ENCODE measurements at regions of chr6 and their contacts with region 1.

Region 1: GRCh38 chr6:169529931-169530751 is 171.7 kb downstream of the WDR27 start:
- DNase-seq: peak; percentile 31
- H3K4me3 Mint-ChIP-seq: peak overlapping the region; percentile 31
- H3K27ac Mint-ChIP-seq: peak overlapping the region; percentile 75
- H3K4me1 Mint-ChIP-seq: peaks cover 19% of the 10 kb centered on the region
- H3K27me3 Mint-ChIP-seq: peaks cover 4% of the 10 kb centered on the region

Region 2: DNA sequence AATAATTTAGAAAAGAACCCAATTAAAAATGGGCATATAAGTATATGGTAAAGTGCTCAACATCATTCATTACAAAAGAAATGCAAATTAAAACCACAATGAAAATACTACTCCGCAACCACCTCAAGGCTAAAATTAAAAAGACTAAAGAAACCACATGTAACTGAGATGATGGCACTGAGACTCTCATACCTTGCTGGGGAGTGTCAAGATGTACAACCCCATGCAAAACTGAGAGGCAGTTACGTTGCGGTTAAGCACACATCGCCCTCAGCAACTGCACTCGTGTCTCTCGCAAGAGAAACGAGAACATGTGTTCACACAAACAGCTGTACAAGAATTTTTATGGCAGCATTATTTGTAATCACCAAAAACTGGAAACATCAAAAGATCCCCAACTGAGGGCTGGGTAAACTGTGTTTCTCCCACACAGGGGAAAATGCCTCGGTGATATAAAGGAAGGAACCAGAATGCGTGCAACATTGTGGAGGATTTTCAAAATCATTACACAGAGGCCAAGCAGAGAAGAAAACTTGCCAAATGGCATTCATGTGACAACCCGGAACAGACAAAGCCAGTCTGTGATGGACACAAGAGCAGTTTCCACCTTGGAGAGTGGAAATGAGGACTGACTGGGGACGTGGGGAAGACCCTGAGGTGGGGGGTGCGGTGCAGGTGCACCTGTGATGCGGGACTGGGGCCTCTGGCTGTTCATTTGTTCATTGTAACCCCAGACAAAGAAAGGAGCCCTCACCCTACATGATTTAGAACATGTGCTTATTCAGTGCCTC is 26.8 kb after region 1 on chr6:
- intact Hi-C with region 1: loop called (anchors 1 kb)
- DNase-seq: peak; percentile 36
- H3K4me3 Mint-ChIP-seq: no peak overlapping the region
- H3K27ac Mint-ChIP-seq: peak overlapping the region; percentile 40
- H3K4me1 Mint-ChIP-seq: peaks cover 21% of the 10 kb centered on the region
- H3K27me3 Mint-ChIP-seq: peaks cover 19% of the 10 kb centered on the region

Region 3: DNA sequence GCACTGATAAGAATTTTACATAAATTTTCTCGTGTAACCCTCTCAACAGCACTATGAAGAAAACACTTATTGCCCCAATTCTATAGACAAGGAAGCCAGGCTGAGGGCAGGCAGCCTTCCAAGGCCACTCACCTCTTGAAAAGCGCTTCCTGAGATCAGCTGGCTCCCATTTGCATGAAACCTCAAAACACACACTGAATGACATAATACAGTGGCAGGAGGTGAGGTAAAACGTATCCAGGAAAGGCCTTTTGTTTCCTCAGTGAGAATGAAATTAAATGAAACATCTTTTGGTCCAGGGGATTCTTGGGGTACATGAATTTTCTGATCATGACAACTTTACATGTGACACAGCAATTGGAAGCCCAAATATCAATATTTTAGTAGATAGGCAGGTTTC is 59.2 kb after region 1 on chr6:
- intact Hi-C with region 1: loop called (anchors 1 kb)
- DNase-seq: no peak
- H3K4me3 Mint-ChIP-seq: no peak overlapping the region
- H3K27ac Mint-ChIP-seq: no peak overlapping the region
- H3K4me1 Mint-ChIP-seq: peaks cover 23% of the 10 kb centered on the region
- H3K27me3 Mint-ChIP-seq: peaks cover 3% of the 10 kb centered on the region

Region 4: GRCh38 chr6:169723200-169723909 is 193.2 kb after region 1 on chr6:
- intact Hi-C with region 1: loop called (anchors 2 kb)
- DNase-seq: peak; percentile 59
- H3K4me3 Mint-ChIP-seq: peak overlapping the region; percentile 97
- H3K27ac Mint-ChIP-seq: peak overlapping the region; percentile 97
- H3K4me1 Mint-ChIP-seq: peaks cover 38% of the 10 kb centered on the region
- H3K27me3 Mint-ChIP-seq: peaks cover 2% of the 10 kb centered on the region

Measured in activated T-helper 2 cell treated with anti-CD3 and anti-CD28 coated beads, Interferon-gamma antibody, Interleukin-2, Interleukin-4, amounts not matched to agents 10 μg/mL and 5 μg/mL and 100 μg/mL, durations not matched to agents 14 hours and 24 hours and 36 hours (primary cell).